AG04450 (cell line): ENCODE measurements at regions of chr1 and their contacts with region 1.

Region 1: DNA sequence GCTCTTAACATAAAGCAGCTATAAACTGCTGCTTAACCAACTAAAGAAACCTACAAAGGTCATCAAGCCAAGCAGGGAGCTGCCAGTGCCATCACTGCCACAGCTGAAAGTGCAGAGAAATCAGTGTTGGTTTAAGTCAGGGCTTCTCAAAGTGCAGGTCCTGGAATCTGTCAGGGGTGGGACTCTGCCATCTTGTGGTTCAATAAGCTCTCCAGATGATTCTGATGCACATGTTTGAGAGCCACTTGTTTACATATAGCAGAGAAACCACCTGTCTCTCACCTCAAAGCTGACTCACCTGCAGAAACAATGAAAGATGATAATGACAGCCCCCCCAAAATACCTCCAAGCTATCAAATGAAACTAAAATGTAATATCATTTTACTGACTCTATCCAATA is 49.3 kb downstream of the SH3GLB1 start:
- DNase-seq: no peak
- H3K4me3 ChIP-seq: no peak overlapping the region
- H3K27ac ChIP-seq: no peak overlapping the region
- H3K27me3 ChIP-seq: no peaks in the 10 kb centered on the region
- CTCF ChIP-seq: no peak

Region 2: GRCh38 chr1:86741947-86742572 is 11.6 kb before region 1 on chr1:
- CTCF ChIA-PET with region 1: interaction called, 16 read pairs
- POLR2A ChIA-PET with region 1: interaction called, 5 read pairs
- DNase-seq: no peak
- H3K4me3 ChIP-seq: no peak overlapping the region
- H3K27ac ChIP-seq: no peak overlapping the region
- H3K27me3 ChIP-seq: no peaks in the 10 kb centered on the region
- CTCF ChIP-seq: peak; percentile 59

Region 3: DNA sequence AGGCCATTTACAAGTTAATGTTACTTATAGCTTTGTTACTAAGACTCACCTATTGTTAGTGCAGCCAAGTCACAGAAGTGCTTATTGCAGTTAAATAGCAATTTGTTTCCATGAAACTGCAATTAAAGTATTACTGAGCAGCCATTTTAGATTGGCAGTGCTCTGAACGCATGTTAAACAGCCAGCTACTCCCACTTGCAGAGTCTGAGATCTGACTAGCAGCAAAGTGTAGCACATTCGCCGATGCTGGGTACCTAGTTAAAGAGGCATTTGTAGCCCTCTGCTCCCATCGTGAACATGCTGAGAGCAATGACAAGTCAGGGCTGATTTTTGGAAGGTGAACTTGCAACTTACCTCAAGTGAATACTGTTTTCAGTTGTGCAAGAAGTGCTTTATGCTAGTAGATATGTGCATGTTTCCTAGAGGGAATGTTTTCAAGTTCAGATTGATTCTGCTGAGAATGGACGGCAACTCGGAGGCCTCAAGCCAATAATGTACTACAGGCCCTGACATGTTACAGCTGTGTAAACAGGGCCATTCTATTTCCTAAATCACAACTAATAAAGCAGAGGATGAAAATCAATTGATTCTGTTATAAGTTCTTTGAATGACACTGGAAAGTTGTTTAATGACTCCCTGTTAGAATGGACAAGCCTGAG is 594.8 kb after region 1 on chr1:
- CTCF ChIA-PET with region 1: no interaction called
- POLR2A ChIA-PET with region 1: no interaction called
- DNase-seq: no peak
- H3K4me3 ChIP-seq: no peak overlapping the region
- H3K27ac ChIP-seq: no peak overlapping the region
- H3K27me3 ChIP-seq: no peaks in the 10 kb centered on the region
- CTCF ChIP-seq: no peak